ENCODE measurements at regions of chr12 and their contacts with region 1.

Region 1: DNA sequence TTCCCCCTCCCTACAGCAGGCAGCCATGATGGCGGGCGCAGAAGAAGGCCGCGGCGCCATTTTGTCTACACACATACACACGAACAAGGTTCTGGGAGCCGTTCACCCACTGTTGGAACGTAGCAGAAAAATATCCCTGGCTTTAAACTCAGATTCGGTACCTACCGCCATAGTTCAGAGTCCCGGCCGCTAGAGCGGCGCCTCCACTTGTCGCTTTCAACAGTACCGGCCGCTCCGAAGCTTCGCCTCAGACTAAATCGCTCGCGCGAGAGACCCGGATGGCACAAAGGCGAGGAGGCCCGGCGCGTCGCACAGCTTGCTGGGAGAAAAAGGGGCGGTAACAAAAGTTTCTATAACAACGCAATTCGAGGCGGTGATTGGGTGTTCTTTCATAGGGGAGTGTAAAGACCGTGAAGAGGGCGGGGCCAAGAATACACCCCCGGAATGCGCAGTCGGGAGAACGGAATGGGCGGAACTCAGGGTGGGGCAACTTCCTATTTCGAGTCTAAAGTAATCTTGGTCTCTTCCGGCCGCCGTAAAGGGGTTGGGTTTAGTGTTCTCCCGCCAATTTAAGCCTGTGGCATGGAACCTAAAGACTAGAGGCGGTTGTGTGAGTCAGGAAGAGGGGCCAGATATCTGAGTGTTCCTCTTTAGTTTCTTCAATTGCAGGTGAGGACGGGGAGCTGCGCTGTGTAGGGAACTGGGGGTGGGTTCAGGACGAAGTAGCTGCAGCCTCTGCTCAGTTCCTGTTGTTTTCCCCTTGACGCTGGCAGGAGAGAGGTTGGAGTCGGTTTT is at the starts of genes KNTC1 and RSRC2:
- DNase-seq: peak; percentile 85
- ATAC-seq: peak; percentile 91
- H3K4me3 Mint-ChIP-seq: no peak within 1 kb of the TSS
- H3K27ac Mint-ChIP-seq: no peak within 1 kb of the TSS
- H3K4me1 Mint-ChIP-seq: peaks cover 43% of the 10 kb centered on the region
- H3K27me3 Mint-ChIP-seq: no peaks in the 10 kb centered on the region
- CTCF ChIP-seq: no peak
- total RNA-seq, gene KNTC1: 45.5 and 64.0 TPM in 2 replicates
- total RNA-seq, gene RSRC2: 106 and 126 TPM in 2 replicates

Region 2: GRCh38 chr12:122265931-122266771 is 260.7 kb before region 1 on chr12 and contains the start of gene VPS33A:
- CTCF ChIA-PET with region 1: no interaction called
- POLR2A ChIA-PET with region 1: interaction called, 4 read pairs
- intact Hi-C with region 1: loop called (anchors 1 kb)
- DNase-seq: peak; percentile 88
- ATAC-seq: peak; percentile 84
- H3K4me3 Mint-ChIP-seq: peak within 1 kb of the TSS; percentile 97
- H3K27ac Mint-ChIP-seq: peak within 1 kb of the TSS; percentile 98
- H3K4me1 Mint-ChIP-seq: peaks cover 21% of the 10 kb centered on the region
- H3K27me3 Mint-ChIP-seq: peaks cover 2% of the 10 kb centered on the region
- CTCF ChIP-seq: no peak
- total RNA-seq, gene VPS33A: 29.6 and 33.2 TPM in 2 replicates

Region 3: DNA sequence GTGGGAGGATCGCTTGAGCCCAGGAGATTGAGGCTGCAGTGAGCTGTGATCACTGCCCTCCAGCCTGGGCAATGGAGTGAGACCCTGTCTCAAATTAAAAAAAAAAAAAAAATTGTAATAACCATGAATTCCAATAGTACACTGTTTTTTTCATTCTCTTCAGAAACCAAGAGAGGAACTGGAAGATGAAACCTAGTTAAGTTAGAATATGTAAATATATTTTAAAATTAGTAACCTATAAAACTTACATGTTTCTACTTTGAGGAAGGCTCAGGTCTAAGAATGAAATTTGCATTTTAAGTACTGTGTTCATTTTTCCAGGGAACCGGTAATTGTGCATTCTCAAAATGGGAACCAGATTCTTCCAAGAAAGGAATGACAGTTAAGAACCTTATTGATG is 19.0 kb after region 1 on chr12:
- CTCF ChIA-PET with region 1: no interaction called
- POLR2A ChIA-PET with region 1: interaction called, 13 read pairs
- intact Hi-C with region 1: loop called (anchors 1 kb)
- DNase-seq: no peak
- ATAC-seq: peak; percentile 80
- H3K4me3 Mint-ChIP-seq: peak overlapping the region; percentile 57
- H3K27ac Mint-ChIP-seq: peak overlapping the region; percentile 83
- H3K4me1 Mint-ChIP-seq: peaks cover 28% of the 10 kb centered on the region
- H3K27me3 Mint-ChIP-seq: no peaks in the 10 kb centered on the region
- CTCF ChIP-seq: no peak

Region 4: GRCh38 chr12:122752464-122753318 is 225.8 kb after region 1 on chr12 and contains the start of gene DENR:
- CTCF ChIA-PET with region 1: no interaction called
- POLR2A ChIA-PET with region 1: interaction called, 8 read pairs
- intact Hi-C with region 1: loop called (anchors 1 kb)
- DNase-seq: peak; percentile 99
- ATAC-seq: peak; percentile 92
- H3K4me3 Mint-ChIP-seq: peak within 1 kb of the TSS; percentile 91
- H3K27ac Mint-ChIP-seq: peak within 1 kb of the TSS; percentile 92
- H3K4me1 Mint-ChIP-seq: peaks cover 46% of the 10 kb centered on the region
- H3K27me3 Mint-ChIP-seq: no peaks in the 10 kb centered on the region
- CTCF ChIP-seq: no peak
- total RNA-seq, gene DENR: 50.5 and 53.3 TPM in 2 replicates

Region 5: DNA sequence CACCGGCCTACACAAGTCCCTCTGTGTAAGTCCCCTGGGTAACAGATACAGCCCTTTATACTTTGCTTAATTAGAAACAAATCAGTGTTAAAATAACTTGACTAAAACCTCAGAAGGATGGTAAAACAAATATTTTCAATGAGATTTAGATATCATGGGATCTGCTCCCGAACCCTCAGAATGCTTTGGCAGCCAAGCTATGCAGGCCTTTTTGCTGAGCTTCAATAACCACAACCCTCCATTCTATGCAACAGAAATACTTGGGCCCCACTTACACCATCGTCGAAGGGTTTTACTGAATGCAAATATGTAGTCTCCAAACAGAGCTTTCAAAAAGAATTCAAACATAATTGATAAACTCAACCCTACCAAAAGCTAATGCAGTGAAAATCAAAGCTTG is 653.3 kb after region 1 on chr12:
- CTCF ChIA-PET with region 1: no interaction called
- POLR2A ChIA-PET with region 1: no interaction called
- intact Hi-C with region 1: no loop called
- DNase-seq: no peak
- ATAC-seq: no peak
- H3K4me3 Mint-ChIP-seq: no peak overlapping the region
- H3K27ac Mint-ChIP-seq: no peak overlapping the region
- H3K4me1 Mint-ChIP-seq: no peaks in the 10 kb centered on the region
- H3K27me3 Mint-ChIP-seq: no peaks in the 10 kb centered on the region
- CTCF ChIP-seq: no peak